ENCODE measurements at regions of chr1 and their contacts with region 1.

Region 1: DNA sequence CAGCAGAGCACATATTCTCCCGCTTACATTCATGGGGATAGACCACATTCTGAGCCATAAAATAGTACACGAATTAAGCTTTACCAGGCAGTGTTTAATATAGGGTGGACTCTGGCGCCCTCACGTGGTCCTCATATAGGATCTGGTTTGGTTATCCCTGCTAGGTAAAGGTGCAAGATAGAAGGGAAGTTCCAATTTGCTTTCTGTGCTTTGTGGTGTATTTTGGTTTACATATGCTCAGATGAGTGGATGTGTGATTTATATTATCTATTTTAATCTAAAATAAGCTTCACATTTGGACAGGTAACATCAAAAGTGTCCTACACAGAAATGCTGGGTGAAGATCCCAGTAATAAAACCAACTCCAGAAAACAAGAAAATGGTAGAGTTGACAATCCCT is 3.6 kb downstream of the CR1 start:
- DNase-seq: peak; percentile 42
- ATAC-seq: peak; percentile 61
- H3K4me3 Mint-ChIP-seq: no peak overlapping the region
- H3K27ac Mint-ChIP-seq: peak overlapping the region; percentile 64
- H3K4me1 Mint-ChIP-seq: peaks cover 38% of the 10 kb centered on the region
- H3K27me3 Mint-ChIP-seq: no peaks in the 10 kb centered on the region
- CTCF ChIP-seq: peak; percentile 60

Region 2: DNA sequence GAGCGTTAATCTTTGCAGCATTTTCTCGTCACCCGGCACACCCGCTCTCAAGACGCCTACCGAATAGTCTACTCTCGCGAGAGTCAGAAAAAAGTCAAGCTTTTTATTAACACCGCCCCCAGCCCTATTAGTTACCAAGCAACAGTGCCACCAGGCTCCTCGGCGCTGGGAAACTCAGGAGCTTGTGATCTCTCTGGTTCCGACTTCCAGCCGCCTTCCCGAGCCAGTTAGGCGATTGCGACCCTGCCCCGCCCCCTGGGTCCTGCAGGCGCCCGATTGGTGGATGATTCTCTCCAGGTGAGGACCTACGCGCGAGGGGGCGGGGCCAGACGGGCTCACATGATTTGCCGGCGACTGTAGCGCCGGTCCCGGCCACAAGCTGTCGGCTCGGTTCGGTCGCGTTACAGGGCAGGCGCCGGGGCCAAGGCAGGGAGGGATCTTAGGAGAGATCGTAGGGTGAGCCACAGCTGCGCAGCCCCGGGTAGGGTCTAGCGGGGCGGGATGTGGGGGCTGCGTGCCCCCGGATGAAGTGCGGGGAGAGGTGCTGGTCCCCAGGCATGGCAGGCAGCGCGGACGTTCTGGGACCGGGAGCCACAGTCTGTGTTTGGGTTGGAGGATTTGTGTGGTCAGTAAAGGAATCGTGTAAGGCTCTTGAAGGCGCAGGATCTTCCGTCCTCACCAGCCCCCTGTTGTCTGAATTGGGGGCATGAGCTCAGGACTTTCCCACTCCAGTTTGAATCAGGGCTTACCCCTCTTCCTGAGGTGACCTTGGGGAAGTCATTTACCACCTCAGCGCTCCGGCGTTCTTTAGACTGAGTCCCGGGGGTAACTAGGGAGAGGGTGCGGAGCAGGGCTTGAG is 446.4 kb before region 1 on chr1 and contains the start of gene PFKFB2:
- CTCF ChIA-PET with region 1: interaction called, 10 read pairs
- POLR2A ChIA-PET with region 1: interaction called, 8 read pairs
- intact Hi-C with region 1: loop called (anchors 1 kb)
- DNase-seq: peak; percentile 94
- ATAC-seq: peak; percentile 86
- H3K4me3 Mint-ChIP-seq: peak within 1 kb of the TSS; percentile 98
- H3K27ac Mint-ChIP-seq: peak within 1 kb of the TSS; percentile 98
- H3K4me1 Mint-ChIP-seq: peaks cover 56% of the 10 kb centered on the region
- H3K27me3 Mint-ChIP-seq: no peaks in the 10 kb centered on the region
- CTCF ChIP-seq: no peak
- total RNA-seq, gene PFKFB2: 7.6 and 10.1 TPM in 2 replicates

Region 3: GRCh38 chr1:207077470-207078377 is 421.8 kb before region 1 on chr1:
- CTCF ChIA-PET with region 1: interaction called, 174 read pairs
- POLR2A ChIA-PET with region 1: no interaction called
- intact Hi-C with region 1: loop called (anchors 1 kb)
- DNase-seq: no peak
- ATAC-seq: peak; percentile 95
- H3K4me3 Mint-ChIP-seq: no peak overlapping the region
- H3K27ac Mint-ChIP-seq: no peak overlapping the region
- H3K4me1 Mint-ChIP-seq: no peaks in the 10 kb centered on the region
- H3K27me3 Mint-ChIP-seq: no peaks in the 10 kb centered on the region
- CTCF ChIP-seq: no peak

Region 4: GRCh38 chr1:207084701-207085180 is 414.8 kb before region 1 on chr1:
- CTCF ChIA-PET with region 1: interaction called, 174 read pairs
- POLR2A ChIA-PET with region 1: interaction called, 7 read pairs
- intact Hi-C with region 1: loop called (anchors 1 kb)
- DNase-seq: no peak
- ATAC-seq: peak; percentile 98
- H3K4me3 Mint-ChIP-seq: no peak overlapping the region
- H3K27ac Mint-ChIP-seq: no peak overlapping the region
- H3K4me1 Mint-ChIP-seq: peaks cover 9% of the 10 kb centered on the region
- H3K27me3 Mint-ChIP-seq: peaks cover 2% of the 10 kb centered on the region
- CTCF ChIP-seq: no peak

Region 5: GRCh38 chr1:207181838-207182237 is 317.7 kb before region 1 on chr1:
- CTCF ChIA-PET with region 1: interaction called, 11 read pairs
- POLR2A ChIA-PET with region 1: no interaction called
- intact Hi-C with region 1: loop called (anchors 2 kb)
- DNase-seq: no peak
- ATAC-seq: no peak
- H3K4me3 Mint-ChIP-seq: no peak overlapping the region
- H3K27ac Mint-ChIP-seq: no peak overlapping the region
- H3K4me1 Mint-ChIP-seq: peaks cover 2% of the 10 kb centered on the region
- H3K27me3 Mint-ChIP-seq: peaks cover 3% of the 10 kb centered on the region
- CTCF ChIP-seq: no peak

Region 6: DNA sequence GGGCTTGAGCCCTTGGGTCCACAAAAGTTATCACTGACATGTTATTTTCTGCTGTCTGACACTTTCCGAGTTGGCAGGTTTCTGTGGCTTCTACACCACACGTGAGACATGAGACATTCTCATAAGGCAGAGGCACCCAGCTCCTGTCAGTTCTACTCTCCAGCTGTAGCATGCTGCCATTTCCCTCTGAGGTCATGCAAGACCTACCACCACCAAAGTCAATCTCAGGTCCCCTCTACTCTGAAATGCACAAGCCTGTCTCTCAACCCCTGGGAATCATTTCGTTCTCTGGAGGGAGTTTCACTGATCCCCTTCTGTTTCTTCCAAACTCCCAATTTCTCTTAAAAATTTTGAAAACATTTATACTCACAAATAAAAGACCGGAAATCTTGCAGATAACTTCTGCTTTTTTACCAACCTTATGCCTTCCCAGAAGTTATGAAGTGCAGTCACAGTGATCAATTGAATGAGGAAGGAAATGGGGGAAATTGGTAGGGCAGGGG is 84.9 kb before region 1 on chr1:
- CTCF ChIA-PET with region 1: interaction called, 7 read pairs
- POLR2A ChIA-PET with region 1: interaction called, 11 read pairs
- intact Hi-C with region 1: no loop called
- DNase-seq: no peak
- ATAC-seq: peak; percentile 76
- H3K4me3 Mint-ChIP-seq: peak overlapping the region; percentile 76
- H3K27ac Mint-ChIP-seq: peak overlapping the region; percentile 96
- H3K4me1 Mint-ChIP-seq: peaks cover 83% of the 10 kb centered on the region
- H3K27me3 Mint-ChIP-seq: no peaks in the 10 kb centered on the region
- CTCF ChIP-seq: no peak

Region 7: DNA sequence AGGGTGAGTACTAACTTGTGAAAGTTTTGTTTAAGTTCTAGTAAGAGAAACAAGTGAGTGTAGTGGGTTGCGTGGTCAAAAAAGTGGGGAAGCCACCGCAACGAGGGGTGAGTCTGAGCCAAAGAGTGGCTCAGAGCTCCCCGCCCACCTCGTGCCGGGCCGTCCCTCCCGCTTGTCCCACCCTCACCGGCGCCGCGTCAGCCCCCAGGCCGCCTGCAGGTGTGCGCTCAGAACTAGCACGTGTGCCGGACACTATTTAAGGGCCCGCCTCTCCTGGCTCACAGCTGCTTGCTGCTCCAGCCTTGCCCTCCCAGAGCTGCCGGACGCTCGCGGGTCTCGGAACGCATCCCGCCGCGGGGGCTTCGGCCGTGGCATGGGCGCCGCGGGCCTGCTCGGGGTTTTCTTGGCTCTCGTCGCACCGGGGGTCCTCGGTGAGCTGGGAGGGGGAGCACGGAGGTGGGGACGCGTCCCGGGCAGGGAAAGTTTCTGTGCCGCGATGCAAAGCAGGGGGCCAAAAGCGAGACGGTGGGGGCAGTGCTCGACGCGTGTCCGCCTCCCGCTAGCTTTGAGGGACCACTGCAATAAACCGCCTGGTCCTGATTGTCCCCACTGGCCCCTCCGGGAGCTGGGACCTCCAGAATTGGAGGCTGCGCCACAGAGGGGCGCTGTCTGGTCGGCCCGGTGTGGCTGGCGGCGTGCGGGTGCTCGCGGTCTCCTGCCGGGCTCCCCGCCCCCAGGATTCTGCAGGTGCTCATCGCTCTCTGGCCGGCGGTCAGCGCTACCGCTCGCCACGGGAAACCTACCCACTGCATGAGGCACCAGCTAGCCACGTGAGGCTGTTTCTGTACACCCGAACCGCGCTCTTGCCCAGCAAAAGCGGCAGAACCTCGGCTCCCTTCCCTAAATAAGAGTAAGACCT is 45.3 kb before region 1 on chr1 and contains the start of gene CR2:
- CTCF ChIA-PET with region 1: interaction called, 34 read pairs
- POLR2A ChIA-PET with region 1: interaction called, 53 read pairs
- intact Hi-C with region 1: loop called (anchors 1 kb)
- DNase-seq: peak; percentile 74
- ATAC-seq: peak; percentile 90
- H3K4me3 Mint-ChIP-seq: no peak within 1 kb of the TSS
- H3K27ac Mint-ChIP-seq: no peak within 1 kb of the TSS
- H3K4me1 Mint-ChIP-seq: peaks cover 4% of the 10 kb centered on the region
- H3K27me3 Mint-ChIP-seq: no peaks in the 10 kb centered on the region
- CTCF ChIP-seq: no peak
- total RNA-seq, gene CR2: 30.7 and 34.1 TPM in 2 replicates

Measured in activated B cell treated with CpG ODN at 0.5 μM for 24 hours (primary cell).